Aorta (tissue), 5 donors: ENCODE measurements at regions of chr14 and their contacts with region 1.

Region 1: GRCh38 chr14:23154964-23155587 is 28.4 kb downstream of the SLC7A8 start:
- DNase-seq: peak; percentile 88 to 92
- ATAC-seq: peak; percentile 88
- H3K4me3 ChIP-seq: no peak overlapping the region
- H3K27ac ChIP-seq: peak overlapping the region; percentile 34 to 90
- H3K4me1 ChIP-seq: peaks cover 0 to 6% of the 10 kb centered on the region in 2 donors
- H3K27me3 ChIP-seq: no peaks in the 10 kb centered on the region

Region 2: DNA sequence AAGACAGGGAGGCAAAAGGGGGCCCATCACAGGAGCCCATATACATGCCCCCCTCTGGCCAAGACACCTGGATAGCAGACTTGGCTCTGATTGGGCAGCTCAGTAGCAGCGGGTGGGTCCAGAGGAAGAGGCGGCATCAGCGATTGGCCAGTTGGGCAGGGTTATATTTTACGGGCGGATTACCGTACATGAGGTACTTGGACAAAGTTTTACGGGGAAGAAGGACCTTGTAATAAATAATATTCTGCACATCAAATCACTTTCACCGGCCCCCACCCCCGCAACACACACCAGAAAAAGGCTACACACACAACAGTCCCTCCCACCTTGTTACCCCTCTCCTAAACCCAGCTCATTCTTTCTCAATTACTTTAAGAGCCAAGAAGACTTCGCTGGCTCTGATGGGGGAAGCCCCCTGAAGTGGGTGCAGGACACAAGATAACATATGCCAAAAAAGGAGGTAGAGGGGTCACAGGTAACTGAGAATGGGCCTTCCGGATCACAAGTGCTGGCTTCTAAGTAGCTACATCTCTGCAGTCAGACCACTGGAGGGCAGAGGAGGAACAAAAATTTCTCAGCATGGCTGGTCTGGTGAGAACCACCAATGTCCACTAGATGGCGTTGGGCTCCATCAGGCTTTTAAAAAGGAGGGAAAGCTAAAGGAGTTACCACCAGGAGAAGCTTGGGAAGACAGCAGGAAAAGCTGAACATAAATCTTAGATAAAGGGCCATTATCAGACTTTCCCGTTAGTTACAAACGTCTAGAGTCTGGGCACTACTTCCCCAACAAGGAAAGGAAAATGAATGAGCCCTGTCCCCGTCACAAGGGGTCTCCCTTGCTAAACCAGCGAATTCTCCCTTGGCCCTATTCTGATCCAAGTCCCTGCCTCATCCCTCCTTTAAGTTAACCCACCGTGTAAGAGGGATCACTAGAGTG is 86.3 kb before region 1 on chr14:
- intact Hi-C with region 1: no loop called
- DNase-seq: peak; percentile 79 to 82
- ATAC-seq: peak; percentile 88
- H3K4me3 ChIP-seq: no peak overlapping the region
- H3K27ac ChIP-seq: no peak overlapping the region
- H3K4me1 ChIP-seq: no peaks in the 10 kb centered on the region
- H3K27me3 ChIP-seq: no peaks in the 10 kb centered on the region

Region 3: DNA sequence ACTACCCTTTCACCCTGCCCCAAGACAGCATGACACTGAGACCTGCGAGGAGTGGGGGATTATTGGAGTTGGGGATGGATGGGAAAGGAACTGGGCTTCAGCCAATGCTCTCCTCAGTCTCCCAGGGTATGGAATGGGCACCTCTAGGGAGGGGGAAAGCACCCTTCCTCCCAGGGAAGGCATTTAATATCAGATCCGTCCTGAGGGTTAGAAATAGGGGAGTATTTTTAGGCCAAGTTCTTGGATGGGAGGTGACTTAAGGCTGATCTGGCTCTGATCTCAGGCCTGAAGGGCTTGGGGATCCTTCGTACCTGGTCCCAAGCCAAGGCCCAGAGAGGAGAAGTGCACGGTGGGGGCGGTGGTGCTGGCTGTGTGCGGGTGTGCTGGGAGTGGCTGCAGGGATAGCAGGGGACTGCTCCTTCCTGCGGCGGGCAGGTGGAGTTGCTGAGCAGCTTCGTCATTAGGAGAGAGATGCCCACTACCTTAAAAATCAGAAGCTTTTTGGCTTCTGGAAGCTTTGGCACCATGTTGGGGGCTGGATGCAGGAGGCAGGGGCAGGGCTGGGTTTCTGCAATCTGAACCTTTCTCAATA is 29.0 kb before region 1 on chr14:
- intact Hi-C with region 1: loop called in 1 of 2 experiments (anchors 2 kb)
- DNase-seq: peak in 1 of 2 donors; percentile 61
- ATAC-seq: no peak
- H3K4me3 ChIP-seq: no peak overlapping the region
- H3K27ac ChIP-seq: peak overlapping the region in 1 of 2 donors; percentile 60
- H3K4me1 ChIP-seq: no peaks in the 10 kb centered on the region
- H3K27me3 ChIP-seq: no peaks in the 10 kb centered on the region

Region 4: GRCh38 chr14:23181453-23181852 is 26.4 kb after region 1 on chr14:
- intact Hi-C with region 1: loop called (anchors 2 kb)
- DNase-seq: no peak
- ATAC-seq: no peak
- H3K4me3 ChIP-seq: peak overlapping the region in 1 of 2 donors; percentile 96
- H3K27ac ChIP-seq: no peak overlapping the region
- H3K4me1 ChIP-seq: peaks cover 0 to 3% of the 10 kb centered on the region in 2 donors
- H3K27me3 ChIP-seq: no peaks in the 10 kb centered on the region

Region 5: GRCh38 chr14:23186913-23187654 is 32.0 kb after region 1 on chr14:
- intact Hi-C with region 1: loop called in 1 of 2 experiments (anchors 2 kb)
- DNase-seq: no peak
- ATAC-seq: peak; percentile 80
- H3K4me3 ChIP-seq: no peak overlapping the region
- H3K27ac ChIP-seq: no peak overlapping the region
- H3K4me1 ChIP-seq: no peaks in the 10 kb centered on the region
- H3K27me3 ChIP-seq: no peaks in the 10 kb centered on the region

Region 6: DNA sequence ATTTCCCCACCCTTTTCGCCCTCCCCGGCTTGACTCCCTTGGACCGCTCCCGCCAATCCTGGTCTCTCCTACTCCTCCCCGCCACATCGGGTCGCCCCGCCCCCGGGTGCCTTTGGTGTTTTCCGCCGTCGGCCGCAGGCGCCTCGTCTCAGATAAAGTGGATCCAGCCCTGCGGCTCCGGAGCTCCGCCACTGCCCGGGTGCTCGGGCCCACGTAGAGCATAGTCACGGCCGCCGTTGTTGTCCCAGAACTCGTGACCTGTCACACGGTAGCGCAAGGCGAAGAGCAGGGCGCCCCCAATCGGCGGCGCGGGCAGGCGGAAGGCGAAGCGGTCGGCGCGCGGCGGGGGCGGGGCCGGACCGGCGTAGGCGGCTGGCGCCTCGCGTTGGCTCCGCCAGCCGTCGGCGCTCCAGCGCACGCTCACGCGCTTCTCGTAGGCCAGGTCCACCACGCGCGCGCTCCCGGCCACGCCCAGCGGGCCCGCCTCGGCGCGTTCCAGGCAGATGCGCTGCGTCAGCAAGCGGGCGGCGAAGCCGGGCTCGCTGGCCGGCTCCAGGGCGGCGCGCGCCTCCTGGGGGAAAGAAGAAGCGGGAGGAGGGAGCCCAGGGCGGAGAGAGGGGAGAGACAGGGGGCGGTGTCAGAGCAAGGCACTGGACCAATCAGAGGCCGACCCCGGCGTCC is 146.4 kb after region 1 on chr14:
- intact Hi-C with region 1: no loop called
- DNase-seq: peak; percentile 99
- ATAC-seq: peak; percentile 93
- H3K4me3 ChIP-seq: peak overlapping the region; percentile 73 to 82
- H3K27ac ChIP-seq: peak overlapping the region; percentile 92 to 98
- H3K4me1 ChIP-seq: peaks cover 0 to 2% of the 10 kb centered on the region in 2 donors
- H3K27me3 ChIP-seq: no peaks in the 10 kb centered on the region